GM12878 (cell line): ENCODE measurements at regions of chr6 and their contacts with region 1.

Region 1: DNA sequence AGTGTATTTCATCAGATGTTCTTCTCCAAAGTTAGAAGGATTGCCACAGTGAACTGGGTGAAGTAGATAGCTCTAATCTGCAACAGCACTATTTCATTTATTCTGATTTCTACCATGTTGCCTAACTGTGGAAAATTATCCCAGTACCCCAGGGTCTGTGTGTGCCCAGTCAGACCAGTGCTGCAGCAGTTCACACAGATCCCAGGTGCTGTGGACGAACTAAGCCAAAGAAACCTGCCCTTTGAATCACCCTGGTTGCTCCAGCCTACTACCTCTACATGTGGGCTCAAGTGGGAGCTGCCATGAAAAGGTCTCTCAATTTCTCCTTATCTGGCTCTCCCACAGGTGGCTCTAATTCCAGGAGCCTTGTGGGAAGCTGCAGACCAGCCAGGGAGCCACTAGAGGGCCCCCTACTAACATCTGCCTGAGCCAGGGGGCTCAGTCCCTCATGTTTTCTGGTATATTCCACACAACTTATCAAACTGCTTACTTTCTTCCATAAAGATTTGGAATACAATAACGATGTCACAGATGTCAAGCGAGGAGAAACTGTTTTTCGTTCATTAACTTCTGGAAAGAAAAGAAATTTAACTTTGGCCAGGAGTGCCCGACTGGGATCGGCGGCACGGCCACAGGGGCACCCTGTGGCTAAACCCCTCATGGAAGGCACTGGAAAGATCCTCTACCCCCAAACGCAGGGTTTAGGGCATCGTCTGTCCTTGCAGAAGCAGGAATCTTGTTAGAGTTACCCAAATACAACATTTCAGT is 31.6 kb upstream of the LY86 start:
- DNase-seq: no peak
- ATAC-seq: peak; percentile 91
- H3K4me3 ChIP-seq: no peak overlapping the region
- H3K27ac ChIP-seq: no peak overlapping the region
- H3K4me1 ChIP-seq: no peaks in the 10 kb centered on the region; the same call in 1 of the 2 replicates
- H3K27me3 ChIP-seq: no peaks in the 10 kb centered on the region
- CTCF ChIP-seq: peak; percentile 82 to 92 (median 91)
- EP300 ChIP-seq: no peak
- POLR2A ChIP-seq: no peak
- RAD21 ChIP-seq: peak; percentile 84

Region 2: GRCh38 chr6:6577736-6578135 is 20.8 kb after region 1 on chr6:
- CTCF ChIA-PET with region 1: interaction called, 92 read pairs
- POLR2A ChIA-PET with region 1: no interaction called
- RAD21 ChIA-PET with region 1: interaction called, 47 read pairs
- SMC1A ChIA-PET with region 1: interaction called, 24 read pairs
- in situ Hi-C with region 1: no loop called
- intact Hi-C with region 1: no loop called
- DNase-seq: no peak
- ATAC-seq: peak; percentile 33; the same call in 1 of the 3 replicates
- H3K4me3 ChIP-seq: no peak overlapping the region
- H3K27ac ChIP-seq: no peak overlapping the region
- H3K4me1 ChIP-seq: peaks cover 4% of the 10 kb centered on the region; the same call in 1 of the 2 replicates
- H3K27me3 ChIP-seq: no peaks in the 10 kb centered on the region
- CTCF ChIP-seq: no peak
- EP300 ChIP-seq: no peak
- POLR2A ChIP-seq: no peak
- RAD21 ChIP-seq: 0 out of 2 replicates have a peak, but pooled peaks have one; percentile 14

Region 3: DNA sequence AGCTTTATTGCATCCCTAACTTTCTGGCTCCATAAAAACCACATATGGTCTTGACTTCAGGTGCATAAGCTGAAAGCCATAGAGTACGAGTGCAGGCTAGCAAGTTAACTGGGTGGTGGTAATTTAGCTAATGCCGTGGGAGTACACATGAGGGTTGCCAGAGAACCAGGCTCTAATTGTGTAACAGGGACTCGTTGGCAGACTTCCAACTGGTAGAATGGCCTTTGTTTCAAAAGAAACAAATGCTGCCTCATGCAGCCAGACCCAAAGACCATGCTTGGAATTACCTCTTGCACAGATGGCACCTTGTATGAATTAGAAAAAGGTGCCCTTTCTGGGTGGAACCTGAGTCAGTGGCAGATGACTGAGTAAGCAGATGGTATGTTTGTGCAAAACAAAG is 104.8 kb after region 1 on chr6:
- CTCF ChIA-PET with region 1: interaction called, 10 read pairs
- POLR2A ChIA-PET with region 1: no interaction called
- RAD21 ChIA-PET with region 1: interaction called, 3 read pairs
- SMC1A ChIA-PET with region 1: interaction called, 6 read pairs
- in situ Hi-C with region 1: no loop called
- intact Hi-C with region 1: no loop called
- DNase-seq: no peak
- ATAC-seq: no peak
- H3K4me3 ChIP-seq: no peak overlapping the region
- H3K27ac ChIP-seq: no peak overlapping the region
- H3K4me1 ChIP-seq: peaks cover 24% of the 10 kb centered on the region
- H3K27me3 ChIP-seq: no peaks in the 10 kb centered on the region
- CTCF ChIP-seq: no peak
- EP300 ChIP-seq: no peak
- POLR2A ChIP-seq: no peak
- RAD21 ChIP-seq: no peak

Region 4: GRCh38 chr6:6793388-6794250 is 236.7 kb after region 1 on chr6:
- CTCF ChIA-PET with region 1: no interaction called
- POLR2A ChIA-PET with region 1: no interaction called
- RAD21 ChIA-PET with region 1: no interaction called
- SMC1A ChIA-PET with region 1: no interaction called
- in situ Hi-C with region 1: no loop called
- intact Hi-C with region 1: no loop called
- DNase-seq: no peak
- ATAC-seq: no peak
- H3K4me3 ChIP-seq: no peak overlapping the region
- H3K27ac ChIP-seq: no peak overlapping the region
- H3K4me1 ChIP-seq: peaks cover 28% of the 10 kb centered on the region
- H3K27me3 ChIP-seq: no peaks in the 10 kb centered on the region
- CTCF ChIP-seq: no peak
- EP300 ChIP-seq: no peak
- POLR2A ChIP-seq: no peak
- RAD21 ChIP-seq: no peak